MCF 10A (cell line): ENCODE measurements at regions of chr20 and their contacts with region 1.

Region 1: DNA sequence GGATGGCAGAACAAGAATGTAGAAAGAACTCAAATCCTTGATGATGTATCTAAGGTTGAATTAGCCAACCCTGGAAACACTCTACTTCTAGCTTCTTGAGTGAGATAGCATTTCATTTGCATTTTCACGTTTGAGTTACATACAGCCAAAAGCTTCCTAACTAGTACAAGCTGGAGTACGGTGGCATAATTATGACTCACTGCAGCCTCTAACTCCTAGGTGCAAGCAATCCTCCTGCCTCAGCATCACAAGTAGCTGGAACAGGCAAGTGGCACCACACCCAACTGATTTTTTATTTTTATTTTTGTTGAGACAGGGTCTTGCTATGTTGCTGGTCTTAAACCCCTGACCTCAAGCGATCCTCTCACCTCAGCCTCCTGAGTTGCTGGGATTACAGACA is 36.5 kb upstream of the STK35 start:
- DNase-seq: peak; percentile 25
- H3K4me3 Mint-ChIP-seq: no peak overlapping the region
- H3K27ac Mint-ChIP-seq: no peak overlapping the region
- H3K4me1 Mint-ChIP-seq: no peaks in the 10 kb centered on the region
- H3K27me3 Mint-ChIP-seq: peaks cover 67% of the 10 kb centered on the region
- CTCF ChIP-seq: no peak

Region 2: DNA sequence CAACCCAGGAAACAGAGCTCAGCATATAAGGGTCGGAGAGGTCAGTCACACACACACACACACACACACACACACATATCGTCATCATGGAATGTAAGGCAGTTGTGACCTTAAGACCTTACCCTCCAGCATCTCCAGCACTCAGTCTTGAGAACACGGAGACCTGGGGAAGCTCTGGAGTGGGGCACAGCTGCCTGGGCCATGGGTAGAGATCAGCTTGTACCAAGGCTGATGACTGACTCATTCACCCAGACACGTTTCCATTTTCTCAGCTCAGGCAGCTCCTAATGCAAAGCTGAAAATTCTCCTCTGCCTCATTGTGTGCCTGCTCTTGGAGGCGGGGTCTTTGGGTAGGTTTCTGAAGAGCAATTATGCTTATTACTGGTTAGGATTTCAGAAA is 32.9 kb before region 1 on chr20:
- CTCF ChIA-PET with region 1: no interaction called
- POLR2A ChIA-PET with region 1: no interaction called
- intact Hi-C with region 1: no loop called
- DNase-seq: no peak
- H3K4me3 Mint-ChIP-seq: no peak overlapping the region
- H3K27ac Mint-ChIP-seq: no peak overlapping the region
- H3K4me1 Mint-ChIP-seq: no peaks in the 10 kb centered on the region
- H3K27me3 Mint-ChIP-seq: peaks cover 88% of the 10 kb centered on the region
- CTCF ChIP-seq: no peak

Region 3: GRCh38 chr20:2051946-2052345 is 13.2 kb before region 1 on chr20:
- CTCF ChIA-PET with region 1: interaction called, 10 read pairs
- POLR2A ChIA-PET with region 1: no interaction called
- intact Hi-C with region 1: no loop called
- DNase-seq: no peak
- H3K4me3 Mint-ChIP-seq: no peak overlapping the region
- H3K27ac Mint-ChIP-seq: no peak overlapping the region
- H3K4me1 Mint-ChIP-seq: no peaks in the 10 kb centered on the region
- H3K27me3 Mint-ChIP-seq: peaks cover 81% of the 10 kb centered on the region
- CTCF ChIP-seq: no peak